PC-3 (cell line): ENCODE measurements at regions of chr3 and their contacts with region 1.

Region 1: DNA sequence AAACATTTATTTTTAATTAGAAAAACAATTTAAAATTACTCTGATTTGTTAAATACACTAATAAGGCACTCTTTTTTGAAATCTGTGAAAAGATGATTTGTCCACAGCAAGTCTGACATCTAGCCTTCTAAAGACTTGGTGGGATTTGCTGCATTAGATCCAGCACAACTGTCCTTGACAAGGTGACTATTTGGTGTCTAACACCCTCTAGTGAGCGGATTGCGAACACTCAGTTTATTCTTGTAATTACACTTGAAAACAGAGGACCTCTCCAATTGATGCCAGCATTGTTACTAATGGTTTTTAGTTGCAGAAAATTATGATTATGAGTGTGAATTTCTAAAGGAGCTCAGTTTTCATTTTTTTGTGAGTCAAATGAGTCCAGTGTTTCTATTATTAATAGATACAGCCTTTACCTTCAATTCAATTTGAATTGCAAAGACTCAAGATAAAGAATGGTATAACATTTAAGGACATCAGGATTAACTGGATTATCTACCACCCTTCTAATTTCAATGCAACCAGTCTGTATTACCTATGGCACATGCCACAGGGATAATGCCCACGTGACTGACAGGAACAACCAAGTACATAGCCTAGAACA is 29.7 kb upstream of the STRIT1 start:
- DNase-seq: peak; percentile 86
- ATAC-seq: peak; percentile 85
- H3K4me3 ChIP-seq: no peak overlapping the region
- H3K27ac ChIP-seq: no peak overlapping the region
- H3K4me1 ChIP-seq: no peaks in the 10 kb centered on the region
- H3K27me3 ChIP-seq: no peaks in the 10 kb centered on the region
- CTCF ChIP-seq: peak; percentile 92

Region 2: GRCh38 chr3:154334973-154335420 is 988.2 kb before region 1 on chr3:
- CTCF ChIA-PET with region 1: no interaction called
- POLR2A ChIA-PET with region 1: no interaction called
- intact Hi-C with region 1: loop called (anchors 1 kb)
- DNase-seq: peak; percentile 70
- ATAC-seq: peak; percentile 57
- H3K4me3 ChIP-seq: no peak overlapping the region
- H3K27ac ChIP-seq: no peak overlapping the region
- H3K4me1 ChIP-seq: no peaks in the 10 kb centered on the region
- H3K27me3 ChIP-seq: peaks cover 35% of the 10 kb centered on the region
- CTCF ChIP-seq: peak; percentile 58

Region 3: DNA sequence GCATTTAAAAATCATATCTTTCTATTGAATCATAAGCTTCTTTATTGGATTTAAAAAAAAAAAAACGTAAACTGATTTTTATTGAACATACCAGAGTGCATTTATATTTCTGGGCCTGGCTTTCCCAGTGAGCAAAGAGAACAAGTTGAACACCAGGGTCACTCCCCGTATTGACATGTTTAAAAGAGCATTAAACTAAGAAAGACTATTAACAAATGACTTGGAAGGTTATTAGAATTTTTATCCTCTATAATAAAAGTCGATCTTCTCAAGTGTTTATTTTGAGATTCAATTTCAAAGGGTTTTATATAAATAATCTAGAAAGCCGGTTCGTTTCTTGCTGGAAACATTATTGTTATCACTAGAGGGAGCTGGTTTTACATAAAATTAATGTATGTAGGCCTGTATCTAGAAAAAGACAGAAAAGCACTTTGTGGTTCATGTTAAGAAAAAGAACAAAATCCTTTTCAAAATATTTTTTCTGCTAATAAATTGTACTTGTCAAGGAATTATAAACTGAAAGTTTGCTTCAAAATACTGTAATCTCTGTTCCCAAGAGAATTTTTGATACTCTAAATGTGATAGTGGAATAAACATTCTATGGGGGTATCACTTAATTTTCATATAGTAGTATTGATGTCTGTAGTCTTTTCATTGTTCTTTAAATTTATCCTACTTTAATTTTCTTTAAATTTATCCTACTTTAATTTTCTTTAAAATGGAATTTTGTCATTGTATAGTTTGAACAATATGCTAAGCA is 564.9 kb before region 1 on chr3:
- CTCF ChIA-PET with region 1: no interaction called
- POLR2A ChIA-PET with region 1: no interaction called
- intact Hi-C with region 1: loop called (anchors 1 kb)
- DNase-seq: peak; percentile 65
- ATAC-seq: peak; percentile 68
- H3K4me3 ChIP-seq: peak overlapping the region; percentile 29; the same call in 1 of the 2 replicates
- H3K27ac ChIP-seq: no peak overlapping the region
- H3K4me1 ChIP-seq: no peaks in the 10 kb centered on the region
- H3K27me3 ChIP-seq: no peaks in the 10 kb centered on the region
- CTCF ChIP-seq: peak; percentile 78

Region 4: DNA sequence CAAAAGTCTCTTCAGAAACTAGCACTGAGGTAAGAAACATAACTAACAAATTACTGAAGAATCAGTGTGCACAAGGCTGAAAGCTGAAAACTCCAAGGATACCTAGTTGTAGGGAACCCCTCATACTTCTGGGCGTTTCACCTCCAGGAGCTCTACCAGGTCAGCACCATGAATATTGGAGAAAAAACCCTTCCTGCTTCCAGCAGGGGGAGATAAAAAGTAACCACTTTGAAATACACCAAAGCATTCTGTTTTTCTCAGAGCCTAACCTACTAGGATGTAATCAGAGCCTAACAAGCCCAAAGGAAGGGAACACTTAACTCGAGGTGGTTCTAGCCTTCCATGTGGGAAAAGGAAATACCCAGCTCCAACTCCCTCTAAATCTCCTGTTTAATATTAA is 418.8 kb before region 1 on chr3:
- CTCF ChIA-PET with region 1: no interaction called
- POLR2A ChIA-PET with region 1: no interaction called
- intact Hi-C with region 1: loop called (anchors 1 kb)
- DNase-seq: peak; percentile 53
- ATAC-seq: peak; percentile 72
- H3K4me3 ChIP-seq: no peak overlapping the region
- H3K27ac ChIP-seq: no peak overlapping the region
- H3K4me1 ChIP-seq: no peaks in the 10 kb centered on the region
- H3K27me3 ChIP-seq: no peaks in the 10 kb centered on the region
- CTCF ChIP-seq: peak; percentile 69

Region 5: GRCh38 chr3:154954753-154955152 is 368.4 kb before region 1 on chr3:
- CTCF ChIA-PET with region 1: no interaction called
- POLR2A ChIA-PET with region 1: no interaction called
- intact Hi-C with region 1: loop called (anchors 1 kb)
- DNase-seq: peak; percentile 46
- ATAC-seq: peak; percentile 49
- H3K4me3 ChIP-seq: no peak overlapping the region
- H3K27ac ChIP-seq: no peak overlapping the region
- H3K4me1 ChIP-seq: no peaks in the 10 kb centered on the region
- H3K27me3 ChIP-seq: no peaks in the 10 kb centered on the region
- CTCF ChIP-seq: peak; percentile 60

Region 6: GRCh38 chr3:155079746-155080487 is 243.2 kb before region 1 on chr3 and contains the start of gene MME:
- CTCF ChIA-PET with region 1: no interaction called
- POLR2A ChIA-PET with region 1: no interaction called
- intact Hi-C with region 1: loop called (anchors 2 kb)
- DNase-seq: peak; percentile 38
- ATAC-seq: peak; percentile 84
- H3K4me3 ChIP-seq: peak within 1 kb of the TSS; percentile 82
- H3K27ac ChIP-seq: no peak within 1 kb of the TSS
- H3K4me1 ChIP-seq: peaks cover 8% of the 10 kb centered on the region
- H3K27me3 ChIP-seq: peaks cover 30% of the 10 kb centered on the region
- CTCF ChIP-seq: no peak
- total RNA-seq, gene MME: 1.2 and 3.1 TPM in 2 replicates

Region 7: GRCh38 chr3:155179966-155180757 is 143.0 kb before region 1 on chr3:
- CTCF ChIA-PET with region 1: no interaction called
- POLR2A ChIA-PET with region 1: no interaction called
- intact Hi-C with region 1: loop called (anchors 1 kb)
- DNase-seq: no peak
- ATAC-seq: no peak
- H3K4me3 ChIP-seq: no peak overlapping the region
- H3K27ac ChIP-seq: no peak overlapping the region
- H3K4me1 ChIP-seq: no peaks in the 10 kb centered on the region
- H3K27me3 ChIP-seq: no peaks in the 10 kb centered on the region
- CTCF ChIP-seq: no peak